Endothelial cell of umbilical vein (primary cell): ENCODE measurements at regions of chr15 and their contacts with region 1.

Region 1: GRCh38 chr15:49155110-49155833 is at the start of gene COPS2:
- DNase-seq: peak; percentile 99
- H3K4me3 ChIP-seq: peak within 1 kb of the TSS; percentile 82 to 96 (median 83)
- H3K27ac ChIP-seq: peak within 1 kb of the TSS; percentile 62
- H3K4me1 ChIP-seq: peaks cover 23% of the 10 kb centered on the region
- H3K27me3 ChIP-seq: no peaks in the 10 kb centered on the region
- CTCF ChIP-seq: no peak
- POLR2A ChIP-seq: peak; percentile 60
- total RNA-seq, gene COPS2: 74.9 and 79.3 TPM in 2 replicates

Region 2: DNA sequence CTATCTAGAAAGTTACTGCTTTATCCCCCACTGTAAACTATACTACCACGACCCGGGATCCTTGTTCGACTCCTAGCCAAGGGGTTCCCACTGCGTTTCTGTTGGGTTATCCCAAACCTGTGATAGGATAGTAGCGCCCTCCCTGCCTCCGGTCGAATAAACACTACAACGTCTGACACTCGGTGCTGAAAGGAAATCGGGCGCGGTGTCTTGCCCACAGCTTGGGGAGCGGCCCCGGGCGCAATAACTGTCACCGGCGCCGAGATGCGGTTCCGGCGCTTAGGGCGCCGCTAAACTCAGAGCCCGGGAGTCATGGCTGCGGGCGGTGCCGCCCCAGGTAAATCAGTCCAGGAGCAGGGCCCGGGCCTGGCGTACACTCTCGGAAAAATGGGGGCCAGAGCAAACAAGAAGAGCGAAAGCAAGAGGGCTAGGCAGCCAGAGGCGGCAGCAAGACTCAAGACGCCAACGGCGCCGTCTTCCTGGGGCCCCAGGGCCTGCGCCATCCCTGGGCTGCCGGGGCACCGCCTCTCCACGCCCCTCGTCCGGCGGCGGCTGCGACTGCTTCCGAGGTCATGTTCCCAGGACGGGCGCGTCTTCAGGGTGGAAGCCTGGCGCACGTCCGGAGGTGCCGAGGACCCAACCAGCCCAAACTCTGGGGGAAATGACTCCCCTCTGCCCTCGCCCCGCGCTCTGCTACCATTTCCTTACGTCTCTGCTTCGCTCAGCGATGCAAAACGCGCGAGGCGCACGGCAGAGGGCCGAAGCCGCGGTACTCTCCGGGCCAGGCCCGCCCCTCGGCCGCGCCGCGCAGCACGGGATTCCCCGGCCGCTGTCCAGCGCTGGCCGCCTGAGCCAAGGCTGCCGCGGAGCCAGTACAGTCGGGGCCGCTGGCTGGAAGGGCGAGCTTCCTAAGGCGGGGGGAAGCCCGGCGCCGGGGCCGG is 824.1 kb before region 1 on chr15 and contains the start of gene DUT:
- CTCF ChIA-PET with region 1: no interaction called
- POLR2A ChIA-PET with region 1: no interaction called
- dilution Hi-C with region 1: no loop called
- intact Hi-C with region 1: loop called (anchors 5 kb)
- DNase-seq: peak; percentile 86
- H3K4me3 ChIP-seq: peak within 1 kb of the TSS; percentile 65 to 92 (median 90)
- H3K27ac ChIP-seq: peak within 1 kb of the TSS; percentile 92
- H3K4me1 ChIP-seq: peaks cover 21% of the 10 kb centered on the region
- H3K27me3 ChIP-seq: no peaks in the 10 kb centered on the region
- CTCF ChIP-seq: no peak
- POLR2A ChIP-seq: peak; percentile 96
- total RNA-seq, gene DUT: 127 and 135 TPM in 2 replicates

Region 3: GRCh38 chr15:48963524-48964113 is 191.7 kb before region 1 on chr15 and contains the start of gene SHC4:
- CTCF ChIA-PET with region 1: no interaction called
- POLR2A ChIA-PET with region 1: no interaction called
- dilution Hi-C with region 1: no loop called
- intact Hi-C with region 1: loop called (anchors 2 kb)
- DNase-seq: peak; percentile 89
- H3K4me3 ChIP-seq: peak within 1 kb of the TSS; percentile 17 to 76 (median 40)
- H3K27ac ChIP-seq: no peak within 1 kb of the TSS
- H3K4me1 ChIP-seq: peaks cover 8% of the 10 kb centered on the region
- H3K27me3 ChIP-seq: peaks cover 13 to 21% of the 10 kb centered on the region in 2 experiments
- CTCF ChIP-seq: no peak
- POLR2A ChIP-seq: no peak
- total RNA-seq, gene SHC4: 0.20 TPM in 1 of 2 replicates, not detected in the other

Region 4: GRCh38 chr15:49135893-49136292 is 19.4 kb before region 1 on chr15:
- CTCF ChIA-PET with region 1: interaction called, 4 read pairs
- POLR2A ChIA-PET with region 1: interaction called, 3 read pairs
- dilution Hi-C with region 1: no loop called
- intact Hi-C with region 1: loop called (anchors 1 kb)
- DNase-seq: peak; percentile 81
- H3K4me3 ChIP-seq: peak overlapping the region in 1 of 3 experiments; percentile 17
- H3K27ac ChIP-seq: peak overlapping the region; percentile 97
- H3K4me1 ChIP-seq: peaks cover 50% of the 10 kb centered on the region
- H3K27me3 ChIP-seq: no peaks in the 10 kb centered on the region
- CTCF ChIP-seq: no peak
- POLR2A ChIP-seq: no peak

Region 5: GRCh38 chr15:49169880-49170597 is 14.8 kb after region 1 on chr15 and contains the start of gene GALK2:
- CTCF ChIA-PET with region 1: interaction called, 6 read pairs
- POLR2A ChIA-PET with region 1: interaction called, 9 read pairs
- dilution Hi-C with region 1: no loop called
- intact Hi-C with region 1: loop called (anchors 1 kb)
- DNase-seq: peak; percentile 85
- H3K4me3 ChIP-seq: peak within 1 kb of the TSS; percentile 66 to 94 (median 88)
- H3K27ac ChIP-seq: peak within 1 kb of the TSS; percentile 78
- H3K4me1 ChIP-seq: peaks cover 10% of the 10 kb centered on the region
- H3K27me3 ChIP-seq: no peaks in the 10 kb centered on the region
- CTCF ChIP-seq: no peak
- POLR2A ChIP-seq: peak; percentile 87
- total RNA-seq, gene GALK2: 31.3 and 34.6 TPM in 2 replicates

Region 6: DNA sequence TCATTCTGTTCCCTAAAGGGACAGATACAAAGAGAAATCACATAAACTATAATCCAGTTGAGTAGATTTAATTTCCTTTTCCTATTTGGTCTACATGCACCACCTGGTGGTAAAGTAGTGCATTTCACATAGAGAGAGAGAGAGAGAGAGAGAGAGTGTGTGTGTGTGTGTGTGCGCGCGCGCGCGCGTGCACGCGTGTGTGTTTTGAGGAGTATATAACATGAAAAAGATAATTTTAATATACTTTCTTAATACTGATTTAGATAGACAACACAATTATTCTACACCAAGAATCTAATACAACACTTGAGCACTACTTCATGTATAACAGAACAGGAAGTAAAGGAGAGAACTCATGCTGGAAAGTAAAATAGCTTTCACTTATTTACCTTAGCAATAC is 266.7 kb after region 1 on chr15:
- CTCF ChIA-PET with region 1: no interaction called
- POLR2A ChIA-PET with region 1: no interaction called
- dilution Hi-C with region 1: no loop called
- intact Hi-C with region 1: loop called (anchors 1 kb)
- DNase-seq: peak; percentile 65
- H3K4me3 ChIP-seq: peak overlapping the region in 1 of 3 experiments; percentile 9
- H3K27ac ChIP-seq: no peak overlapping the region
- H3K4me1 ChIP-seq: peaks cover 2% of the 10 kb centered on the region
- H3K27me3 ChIP-seq: peaks cover 0 to 3% of the 10 kb centered on the region in 2 experiments
- CTCF ChIP-seq: peak; percentile 58 to 78
- POLR2A ChIP-seq: no peak

Region 7: DNA sequence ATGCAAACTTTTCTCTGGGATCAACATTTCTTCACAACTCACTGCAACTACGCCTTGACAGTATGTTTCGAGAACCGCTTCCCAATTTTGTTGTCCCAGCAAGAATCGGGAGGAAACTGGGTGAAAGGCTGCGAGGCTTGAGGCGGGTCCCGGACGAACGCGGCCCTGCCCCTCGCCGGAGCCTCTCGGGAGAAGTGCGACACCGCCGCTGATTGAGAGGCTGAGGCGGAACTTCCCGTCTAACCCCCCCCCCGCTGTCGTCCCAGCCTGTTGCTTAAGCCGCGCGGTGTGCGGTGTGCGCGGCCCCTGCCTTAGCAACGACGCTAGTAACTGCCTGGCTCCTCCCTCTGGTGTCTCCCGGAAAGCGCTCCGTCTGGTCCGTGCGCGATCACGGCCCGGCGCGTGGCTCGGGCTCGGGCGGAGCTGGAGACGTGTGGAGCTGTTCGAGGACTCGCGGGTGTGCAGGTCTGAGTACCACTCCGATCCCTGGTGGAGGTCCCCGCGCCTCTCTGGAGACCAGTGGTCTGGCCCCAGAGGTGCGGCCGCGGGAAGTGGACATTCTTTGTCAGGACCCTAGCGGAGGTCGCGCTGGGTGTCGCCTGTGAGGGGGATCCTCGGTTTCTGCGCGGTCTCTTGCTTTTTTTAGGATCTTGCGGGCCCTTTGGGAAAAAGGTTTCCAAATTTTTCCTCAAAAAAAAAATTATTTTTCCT is 465.5 kb after region 1 on chr15 and contains the starts of genes DTWD1 and FAM227B:
- CTCF ChIA-PET with region 1: no interaction called
- POLR2A ChIA-PET with region 1: no interaction called
- dilution Hi-C with region 1: no loop called
- intact Hi-C with region 1: loop called (anchors 1 kb)
- DNase-seq: peak; percentile 98
- H3K4me3 ChIP-seq: peak within 1 kb of the TSS; percentile 79 to 95 (median 91)
- H3K27ac ChIP-seq: peak within 1 kb of the TSS; percentile 64
- H3K4me1 ChIP-seq: peaks cover 11% of the 10 kb centered on the region
- H3K27me3 ChIP-seq: no peaks in the 10 kb centered on the region
- CTCF ChIP-seq: no peak
- POLR2A ChIP-seq: peak; percentile 88
- total RNA-seq, gene DTWD1: 18.7 and 20.1 TPM in 2 replicates
- total RNA-seq, gene FAM227B: 1.5 and 1.8 TPM in 2 replicates